PC-3 (cell line): ENCODE measurements at regions of chr2 and their contacts with region 1.

Region 1: GRCh38 chr2:187299122-187299906 is 148.7 kb downstream of the CALCRL start:
- DNase-seq: peak; percentile 27
- ATAC-seq: peak; percentile 27; the same call in 1 of the 2 replicates
- H3K4me3 ChIP-seq: no peak overlapping the region
- H3K27ac ChIP-seq: no peak overlapping the region
- H3K4me1 ChIP-seq: no peaks in the 10 kb centered on the region
- H3K27me3 ChIP-seq: no peaks in the 10 kb centered on the region
- CTCF ChIP-seq: peak; percentile 59

Region 2: DNA sequence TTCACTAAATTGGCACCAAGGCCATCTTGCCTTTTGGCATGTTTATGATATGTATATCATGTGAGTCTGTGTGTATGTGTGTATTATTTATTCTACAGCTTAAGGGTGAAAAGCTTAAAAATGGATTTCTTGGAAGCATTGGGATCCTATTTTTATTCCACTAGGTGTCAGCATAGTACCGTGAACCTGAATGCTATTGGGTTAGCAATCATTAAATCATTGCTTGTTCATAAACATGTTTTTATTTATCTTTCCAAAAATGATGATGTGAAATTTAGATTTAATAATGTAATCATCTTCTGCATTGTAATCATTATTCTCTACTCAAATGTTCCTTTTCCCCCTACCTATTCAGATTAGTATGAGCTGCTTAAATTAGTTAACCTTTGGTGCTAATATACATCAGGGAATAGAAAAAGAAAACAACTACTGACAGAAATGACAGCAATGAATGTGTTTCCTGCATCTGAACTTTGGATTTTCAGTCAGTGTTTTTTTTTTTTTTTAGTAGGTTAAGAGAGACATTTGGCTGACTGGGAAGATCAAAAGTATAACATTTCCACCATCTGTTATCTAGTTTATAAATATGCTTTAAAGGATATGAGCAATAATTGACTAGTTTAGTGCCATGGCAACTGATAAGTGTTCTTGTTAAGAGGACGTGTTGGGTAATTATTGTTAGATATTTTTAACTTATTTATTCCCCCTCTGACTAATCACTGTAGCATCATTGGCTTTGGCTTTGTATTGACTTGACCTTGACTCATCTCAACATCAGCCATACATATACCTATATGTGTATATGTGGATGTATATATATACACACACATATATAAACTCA is 436.2 kb before region 1 on chr2:
- CTCF ChIA-PET with region 1: interaction called, 3 read pairs
- POLR2A ChIA-PET with region 1: interaction called, 3 read pairs
- intact Hi-C with region 1: loop called (anchors 2 kb)
- DNase-seq: peak; percentile 71
- ATAC-seq: peak; percentile 78
- H3K4me3 ChIP-seq: no peak overlapping the region
- H3K27ac ChIP-seq: no peak overlapping the region
- H3K4me1 ChIP-seq: no peaks in the 10 kb centered on the region
- H3K27me3 ChIP-seq: peaks cover 3% of the 10 kb centered on the region; the same call in 1 of the 2 replicates
- CTCF ChIP-seq: peak; percentile 89

Region 3: GRCh38 chr2:187174582-187174981 is 124.7 kb before region 1 on chr2:
- CTCF ChIA-PET with region 1: no interaction called
- POLR2A ChIA-PET with region 1: no interaction called
- intact Hi-C with region 1: no loop called
- DNase-seq: peak; percentile 13
- ATAC-seq: no peak
- H3K4me3 ChIP-seq: no peak overlapping the region
- H3K27ac ChIP-seq: no peak overlapping the region
- H3K4me1 ChIP-seq: no peaks in the 10 kb centered on the region
- H3K27me3 ChIP-seq: no peaks in the 10 kb centered on the region
- CTCF ChIP-seq: peak; percentile 63

Region 4: GRCh38 chr2:187319441-187320108 is 20.3 kb after region 1 on chr2:
- CTCF ChIA-PET with region 1: no interaction called
- POLR2A ChIA-PET with region 1: no interaction called
- intact Hi-C with region 1: no loop called
- DNase-seq: peak; percentile 5
- ATAC-seq: peak; percentile 54
- H3K4me3 ChIP-seq: no peak overlapping the region
- H3K27ac ChIP-seq: no peak overlapping the region
- H3K4me1 ChIP-seq: no peaks in the 10 kb centered on the region
- H3K27me3 ChIP-seq: no peaks in the 10 kb centered on the region
- CTCF ChIP-seq: no peak